HEK293 (cell line): ENCODE measurements at regions of chr19 and their contacts with region 1.

Region 1: DNA sequence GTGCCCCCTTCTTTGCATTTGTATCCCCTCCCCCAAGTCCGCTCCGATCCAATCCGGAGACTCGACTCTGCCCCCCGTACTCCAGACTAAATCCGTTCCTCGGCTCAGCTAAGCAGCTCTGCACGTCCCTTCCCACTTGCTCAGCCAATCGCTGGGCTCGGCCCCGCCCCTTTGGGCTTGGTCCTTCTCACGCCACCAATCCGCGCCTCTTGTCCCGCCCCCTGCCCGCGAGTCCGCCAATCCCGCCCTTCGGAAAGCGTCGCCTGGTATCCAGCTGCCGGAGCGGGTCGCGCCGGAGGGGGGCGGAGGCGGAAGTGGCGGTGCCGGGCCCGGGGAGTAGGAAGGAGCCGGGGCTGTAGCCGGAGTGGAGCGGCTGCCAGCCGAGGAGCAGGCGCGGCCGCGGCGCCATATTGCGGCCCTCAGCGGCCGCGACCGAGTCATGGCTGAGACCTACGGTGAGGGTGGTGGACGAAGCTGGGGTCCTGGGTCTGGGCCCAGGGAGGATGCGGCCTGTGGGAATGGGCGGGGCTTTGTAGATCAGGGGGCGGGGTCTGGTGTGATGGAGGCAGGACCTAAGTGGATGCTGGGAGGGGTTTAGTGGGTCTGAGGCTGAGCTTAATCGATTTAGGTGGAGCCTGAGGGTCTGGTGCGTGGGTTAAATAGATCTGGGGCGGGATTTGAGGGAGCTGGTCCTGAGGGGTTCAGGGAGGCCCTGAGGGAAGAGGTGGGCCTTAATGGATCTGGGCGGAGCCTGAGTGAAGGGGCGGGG is at the start of gene RAB4B:
- H3K4me3 ChIP-seq: peak within 1 kb of the TSS; percentile 68
- H3K27ac ChIP-seq: peak within 1 kb of the TSS; percentile 95
- H3K4me1 ChIP-seq: peaks cover 13% of the 10 kb centered on the region
- CTCF ChIP-seq: peak; percentile 55

Region 2: DNA sequence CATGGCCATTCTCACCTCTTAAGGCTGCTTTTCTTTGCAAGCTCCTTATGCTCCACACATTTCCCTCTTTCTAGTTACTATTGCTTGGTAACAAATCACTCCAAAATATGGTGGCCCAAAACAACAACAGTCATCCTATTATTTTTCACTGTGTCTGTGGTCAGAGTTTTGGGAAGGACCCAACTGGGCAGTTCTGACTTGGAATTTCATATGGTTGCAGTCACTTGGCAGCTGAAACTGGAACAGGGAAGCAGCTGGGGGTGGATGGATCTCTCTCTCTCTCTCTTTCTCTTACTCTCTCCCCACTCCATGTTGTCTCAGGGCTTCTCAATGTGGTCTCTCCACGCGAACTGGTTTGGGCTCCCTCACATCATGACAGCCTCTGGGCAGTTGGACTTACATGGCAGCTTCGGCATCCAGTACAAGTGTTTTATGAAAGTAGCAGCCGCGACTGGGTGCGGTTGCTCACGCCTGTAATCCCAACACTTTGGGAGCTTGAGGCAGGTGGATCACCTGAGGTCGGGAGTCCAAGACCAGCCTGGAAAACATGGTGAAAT is 127.3 kb before region 1 on chr19:
- CTCF ChIA-PET with region 1: interaction called, 3 read pairs
- POLR2A ChIA-PET with region 1: interaction called, 10 read pairs
- H3K4me3 ChIP-seq: no peak overlapping the region
- H3K27ac ChIP-seq: no peak overlapping the region
- H3K4me1 ChIP-seq: peaks cover 11% of the 10 kb centered on the region
- CTCF ChIP-seq: no peak

Region 3: GRCh38 chr19:40716655-40717324 is 61.3 kb before region 1 on chr19 and contains the starts of genes COQ8B and ITPKC:
- CTCF ChIA-PET with region 1: no interaction called
- POLR2A ChIA-PET with region 1: interaction called, 30 read pairs
- H3K4me3 ChIP-seq: peak within 1 kb of the TSS; percentile 60
- H3K27ac ChIP-seq: peak within 1 kb of the TSS; percentile 86
- H3K4me1 ChIP-seq: peaks cover 47% of the 10 kb centered on the region
- CTCF ChIP-seq: peak; percentile 47

Region 4: DNA sequence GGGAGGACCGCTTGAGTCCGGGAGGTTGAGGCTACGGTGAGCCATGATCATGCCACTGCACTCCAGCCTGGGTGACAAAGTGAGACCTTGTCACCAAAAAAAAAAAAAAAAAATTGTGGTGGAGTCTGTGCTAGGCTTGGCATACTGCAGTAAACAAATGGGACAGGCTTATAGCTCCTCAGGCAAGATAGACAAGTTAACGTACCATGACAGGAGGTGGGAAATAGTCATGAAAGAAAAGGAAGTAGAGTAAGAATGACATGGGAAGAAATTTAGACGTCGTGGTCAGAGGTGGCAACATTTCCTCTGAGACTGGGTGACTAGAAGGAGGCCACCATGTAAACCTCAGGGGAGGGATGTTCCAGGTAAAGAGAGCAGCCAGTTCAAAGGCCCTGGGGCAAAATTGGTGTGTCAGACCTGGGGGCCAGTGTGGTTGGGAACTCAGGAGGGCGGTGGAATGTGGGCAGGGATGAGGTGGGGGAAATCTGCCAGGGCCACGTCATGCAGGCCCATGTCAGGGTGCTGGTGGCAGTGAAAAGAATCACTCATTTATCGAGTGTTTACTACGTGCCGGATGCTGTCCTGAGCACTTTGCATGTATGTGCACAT is 21.5 kb before region 1 on chr19:
- CTCF ChIA-PET with region 1: interaction called, 6 read pairs
- POLR2A ChIA-PET with region 1: interaction called, 180 read pairs
- H3K4me3 ChIP-seq: no peak overlapping the region
- H3K27ac ChIP-seq: no peak overlapping the region; the same call in 1 of the 2 replicates
- H3K4me1 ChIP-seq: peaks cover 28% of the 10 kb centered on the region
- CTCF ChIP-seq: no peak

Region 5: DNA sequence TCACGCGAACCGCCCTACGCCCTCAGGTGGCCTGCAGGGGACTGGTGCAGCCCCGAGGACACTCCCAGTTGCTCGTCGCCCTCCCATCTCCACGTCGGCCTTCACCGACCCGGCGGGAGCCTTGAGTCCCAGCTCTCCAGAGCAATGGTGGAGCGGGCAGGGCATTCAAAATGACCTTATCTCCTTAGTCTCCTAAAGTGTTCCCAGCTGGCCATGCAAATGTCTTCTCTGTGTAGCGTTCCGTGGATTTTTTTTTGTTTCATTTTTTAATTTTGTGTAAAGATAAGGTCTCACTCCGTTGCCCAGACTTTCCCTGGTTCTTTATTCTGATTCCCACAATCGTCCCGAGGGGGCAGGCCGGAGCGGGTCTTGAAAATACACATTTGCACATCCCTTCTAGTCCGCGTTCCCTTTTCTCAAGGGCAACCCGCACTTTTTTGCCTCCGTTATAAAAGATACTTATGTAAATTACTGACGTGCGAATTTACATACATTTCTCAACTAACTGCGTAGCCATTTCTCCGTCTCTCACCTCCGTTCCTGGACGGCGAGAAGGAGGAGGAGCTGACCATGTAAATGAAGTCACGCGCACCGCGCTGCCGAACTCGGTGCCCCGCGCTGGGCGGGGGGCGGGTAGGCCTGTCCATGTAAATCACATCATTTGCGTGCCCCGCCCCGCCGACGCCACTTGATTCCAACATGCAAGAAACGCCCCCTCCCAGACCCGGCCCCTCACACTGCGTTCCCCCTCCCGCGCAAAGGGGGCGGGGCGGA is 20.3 kb after region 1 on chr19:
- CTCF ChIA-PET with region 1: interaction called, 17 read pairs
- POLR2A ChIA-PET with region 1: interaction called, 86 read pairs
- H3K4me3 ChIP-seq: peak overlapping the region; percentile 44
- H3K27ac ChIP-seq: peak overlapping the region; percentile 92
- H3K4me1 ChIP-seq: peaks cover 39% of the 10 kb centered on the region
- CTCF ChIP-seq: peak; percentile 94